ENCODE measurements at regions of chr13 and their contacts with region 1.

Region 1: DNA sequence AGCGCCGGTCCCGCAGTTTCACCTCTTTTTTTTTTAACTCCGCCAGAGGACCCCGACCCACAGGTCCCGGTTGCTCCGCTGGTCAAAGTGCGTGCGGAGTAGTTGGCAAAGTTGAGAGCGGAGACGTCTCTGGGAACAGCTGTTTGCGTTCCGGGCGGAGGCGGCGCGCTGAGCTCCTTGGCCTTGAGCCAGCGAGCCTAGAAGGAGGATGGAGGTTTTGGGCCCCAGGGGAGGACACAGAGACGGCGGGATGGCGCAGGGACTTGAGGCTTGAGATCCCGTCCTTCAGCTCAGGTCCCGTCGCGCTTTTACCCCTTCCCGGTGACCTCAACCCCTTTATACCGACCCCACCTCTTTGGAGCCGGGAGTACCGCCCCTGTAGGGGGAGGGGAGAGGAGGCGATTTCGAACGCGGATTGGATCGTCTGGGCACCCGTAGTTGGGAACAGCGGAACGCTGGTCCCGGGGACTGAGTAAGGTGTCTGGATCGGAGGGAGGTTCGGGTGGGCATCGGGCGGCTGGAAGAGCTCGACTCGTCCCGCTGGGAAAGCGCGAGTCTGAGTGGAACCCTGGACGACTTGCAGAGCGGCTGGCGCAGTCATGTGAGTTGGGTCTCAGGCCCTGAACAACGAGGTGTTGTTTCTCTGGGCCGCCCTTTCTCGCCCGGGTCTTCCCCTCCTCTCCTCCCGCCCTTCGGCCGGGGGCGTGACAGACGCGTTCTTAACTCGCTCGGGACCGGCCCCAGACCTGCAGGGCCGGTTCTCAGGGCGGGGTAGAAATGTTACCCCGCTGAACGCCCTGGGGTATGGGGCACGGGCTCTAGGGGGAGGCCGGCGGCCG is at the start of gene WBP4:
- DNase-seq: peak; percentile 94
- ATAC-seq: peak; percentile 76
- H3K4me3 ChIP-seq: peak within 1 kb of the TSS; percentile 69 to 70
- H3K27ac ChIP-seq: peak within 1 kb of the TSS; percentile 94
- H3K4me1 ChIP-seq: peaks cover 49 to 67% of the 10 kb centered on the region in 2 experiments
- H3K27me3 ChIP-seq: no peaks in the 10 kb centered on the region
- CTCF ChIP-seq: no peak
- POLR2A ChIP-seq: peak; percentile 69
- RAD21 ChIP-seq: no peak
- total RNA-seq, gene WBP4: 14.5 TPM

Region 2: GRCh38 chr13:40992678-40993518 is 68.4 kb before region 1 on chr13:
- CTCF ChIA-PET with region 1: no interaction called
- POLR2A ChIA-PET with region 1: no interaction called
- RAD21 ChIA-PET with region 1: no interaction called
- intact Hi-C with region 1: loop called (anchors 1 kb)
- DNase-seq: no peak
- ATAC-seq: no peak
- H3K4me3 ChIP-seq: no peak overlapping the region; a peak in 1 of 4 replicates
- H3K27ac ChIP-seq: peak overlapping the region; percentile 77
- H3K4me1 ChIP-seq: peaks cover 35% of the 10 kb centered on the region in 2 experiments
- H3K27me3 ChIP-seq: no peaks in the 10 kb centered on the region
- CTCF ChIP-seq: peak in 1 of 3 experiments; percentile 12; a peak in 2 of 6 replicates
- POLR2A ChIP-seq: no peak
- RAD21 ChIP-seq: peak; percentile 45

Region 3: GRCh38 chr13:41075034-41075433 is 13.7 kb after region 1 on chr13:
- CTCF ChIA-PET with region 1: no interaction called
- POLR2A ChIA-PET with region 1: no interaction called
- RAD21 ChIA-PET with region 1: no interaction called
- intact Hi-C with region 1: no loop called
- DNase-seq: no peak
- ATAC-seq: peak; percentile 52
- H3K4me3 ChIP-seq: no peak overlapping the region
- H3K27ac ChIP-seq: no peak overlapping the region
- H3K4me1 ChIP-seq: no peaks in the 10 kb centered on the region
- H3K27me3 ChIP-seq: no peaks in the 10 kb centered on the region
- CTCF ChIP-seq: peak; percentile 49 to 60 (median 49); a peak in 5 of 6 replicates
- POLR2A ChIP-seq: no peak
- RAD21 ChIP-seq: peak; percentile 70

Region 4: GRCh38 chr13:41132512-41133152 is 71.3 kb after region 1 on chr13 and contains the start of gene KBTBD6:
- CTCF ChIA-PET with region 1: no interaction called
- POLR2A ChIA-PET with region 1: no interaction called
- RAD21 ChIA-PET with region 1: no interaction called
- intact Hi-C with region 1: loop called (anchors 2 kb)
- DNase-seq: peak; percentile 96
- ATAC-seq: peak; percentile 99
- H3K4me3 ChIP-seq: peak within 1 kb of the TSS; percentile 74 to 75
- H3K27ac ChIP-seq: peak within 1 kb of the TSS; percentile 65
- H3K4me1 ChIP-seq: peaks cover 2 to 25% of the 10 kb centered on the region in 2 experiments; a peak in 3 of 4 replicates
- H3K27me3 ChIP-seq: no peaks in the 10 kb centered on the region
- CTCF ChIP-seq: no peak
- POLR2A ChIP-seq: peak; percentile 73
- RAD21 ChIP-seq: no peak
- total RNA-seq, gene KBTBD6: 9.1 TPM

Measured in HCT116 (cell line).